Activated B cell treated with CpG ODN at 0.5 μM for 24 hours (primary cell): ENCODE measurements at regions of chr7 and their contacts with region 1.

Region 1: DNA sequence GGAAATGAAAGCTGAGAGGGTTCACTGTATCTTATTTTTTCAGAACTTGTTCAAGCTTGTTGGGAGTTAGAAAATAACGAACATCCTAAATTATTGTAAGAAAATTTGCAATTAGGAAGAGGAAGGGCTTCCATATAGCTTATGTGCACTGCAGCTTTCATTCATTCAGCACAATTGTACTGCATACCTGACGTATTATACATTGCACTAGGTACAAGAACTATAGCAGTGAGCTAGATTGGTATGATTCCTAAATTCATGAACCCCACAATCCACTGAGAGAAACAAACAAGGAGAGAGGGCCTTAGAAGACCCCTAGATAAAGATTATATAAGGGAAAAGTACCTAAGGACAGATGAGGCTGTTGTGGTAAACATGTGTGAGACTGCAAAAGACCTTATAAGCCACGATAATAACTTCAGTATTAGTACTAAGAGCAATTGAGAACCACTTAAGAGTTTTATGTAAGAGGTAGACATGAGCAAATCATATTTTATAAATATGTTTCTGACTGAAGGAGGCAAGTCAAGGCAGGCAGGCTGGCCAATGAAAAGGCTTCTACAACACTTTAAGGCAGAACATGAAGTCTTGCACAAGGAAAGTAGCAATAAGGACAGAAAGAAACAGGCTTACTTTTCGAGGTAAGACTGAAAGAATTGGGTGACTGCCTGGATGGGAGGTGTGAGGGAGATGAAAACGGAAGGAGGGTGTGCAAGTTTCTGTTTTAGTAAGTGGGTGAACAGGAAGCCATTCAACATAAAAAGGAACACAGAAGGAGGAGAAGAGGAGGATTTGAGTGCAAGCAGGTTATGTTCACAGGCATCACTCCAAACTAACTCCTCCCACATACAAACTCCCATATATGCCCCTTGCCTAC is 77.9 kb upstream of the LRRN3 start:
- DNase-seq: no peak
- ATAC-seq: peak; percentile 90
- H3K4me3 Mint-ChIP-seq: peak overlapping the region; percentile 50
- H3K27ac Mint-ChIP-seq: peak overlapping the region; percentile 77
- H3K4me1 Mint-ChIP-seq: peaks cover 26% of the 10 kb centered on the region
- H3K27me3 Mint-ChIP-seq: no peaks in the 10 kb centered on the region
- CTCF ChIP-seq: no peak

Region 2: DNA sequence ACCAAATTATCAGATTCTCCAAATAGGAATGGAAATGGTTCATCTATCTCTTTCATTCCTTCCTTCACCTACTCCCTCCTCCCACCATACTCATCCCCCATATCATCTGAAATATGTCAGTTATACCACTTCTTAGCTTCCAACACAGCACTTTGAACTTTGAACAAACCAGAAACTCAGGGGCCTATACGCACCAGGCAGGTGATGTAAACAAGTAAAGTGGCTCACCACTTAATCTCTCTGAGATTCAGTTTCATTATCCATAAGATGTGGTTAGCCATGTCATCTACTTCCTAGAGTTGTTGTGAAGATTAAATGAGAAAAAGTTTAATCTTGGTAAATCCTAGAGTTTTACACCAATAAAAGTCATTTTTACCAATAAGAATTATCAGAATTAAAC is 12.0 kb after region 1 on chr7:
- CTCF ChIA-PET with region 1: interaction called, 3 read pairs
- POLR2A ChIA-PET with region 1: interaction called, 5 read pairs
- intact Hi-C with region 1: loop called (anchors 2 kb)
- DNase-seq: no peak
- ATAC-seq: no peak
- H3K4me3 Mint-ChIP-seq: no peak overlapping the region
- H3K27ac Mint-ChIP-seq: no peak overlapping the region
- H3K4me1 Mint-ChIP-seq: peaks cover 6% of the 10 kb centered on the region
- H3K27me3 Mint-ChIP-seq: no peaks in the 10 kb centered on the region
- CTCF ChIP-seq: no peak